ENCODE measurements at regions of chr1 and their contacts with region 1.

Region 1: GRCh38 chr1:43238085-43238484 is 31.7 kb upstream of the TMEM125 start:
- DNase-seq: no peak
- ATAC-seq: peak; percentile 64
- H3K4me3 ChIP-seq: no peak overlapping the region
- H3K27ac ChIP-seq: no peak overlapping the region
- H3K4me1 ChIP-seq: peaks cover 19% of the 10 kb centered on the region
- H3K27me3 ChIP-seq: no peaks in the 10 kb centered on the region
- CTCF ChIP-seq: peak; percentile 62 to 76 (median 74)
- EP300 ChIP-seq: no peak
- POLR2A ChIP-seq: no peak
- RAD21 ChIP-seq: peak; percentile 91

Region 2: DNA sequence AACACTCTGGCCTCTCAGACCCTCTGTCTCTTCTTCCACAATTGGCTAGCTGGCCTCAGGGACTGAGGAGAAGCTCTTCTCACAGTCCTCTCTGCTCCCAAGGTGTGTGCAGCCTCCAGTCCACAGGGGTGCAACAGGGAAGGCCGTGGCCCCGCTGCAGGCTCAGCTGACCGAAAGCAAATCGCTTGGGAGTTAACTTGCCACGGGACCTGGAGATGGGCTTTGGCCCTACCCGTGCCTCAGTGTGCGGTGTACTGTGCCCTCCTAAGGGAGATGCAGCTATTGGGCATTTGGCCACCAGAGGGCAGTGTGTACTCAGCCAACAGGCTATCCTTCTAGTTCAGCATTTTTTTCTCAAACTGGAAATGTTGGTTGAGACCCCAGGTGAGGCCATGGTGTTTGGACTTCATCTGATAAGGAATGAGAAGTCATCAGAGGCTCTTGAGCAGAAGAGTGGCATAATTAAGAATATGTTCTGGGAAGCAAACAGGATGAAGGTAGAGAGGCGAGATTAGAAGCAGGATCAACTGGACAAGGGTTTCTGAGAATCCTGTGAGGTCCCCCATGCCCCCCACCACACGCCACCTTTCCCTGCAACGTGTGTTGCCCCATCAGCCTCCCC is 10.8 kb before region 1 on chr1:
- CTCF ChIA-PET with region 1: interaction called, 34 read pairs
- POLR2A ChIA-PET with region 1: interaction called, 4 read pairs
- RAD21 ChIA-PET with region 1: interaction called, 14 read pairs
- SMC1A ChIA-PET with region 1: interaction called, 10 read pairs
- in situ Hi-C with region 1: no loop called
- intact Hi-C with region 1: no loop called
- DNase-seq: peak; percentile 34
- ATAC-seq: peak; percentile 99
- H3K4me3 ChIP-seq: no peak overlapping the region
- H3K27ac ChIP-seq: no peak overlapping the region
- H3K4me1 ChIP-seq: no peaks in the 10 kb centered on the region; the same call in none of the 2 replicates
- H3K27me3 ChIP-seq: no peaks in the 10 kb centered on the region
- CTCF ChIP-seq: peak; percentile 91 to 95 (median 94)
- EP300 ChIP-seq: no peak
- POLR2A ChIP-seq: no peak
- RAD21 ChIP-seq: peak; percentile 97

Region 3: GRCh38 chr1:43329995-43330751 is 92.1 kb after region 1 on chr1:
- CTCF ChIA-PET with region 1: interaction called, 3 read pairs
- POLR2A ChIA-PET with region 1: no interaction called
- RAD21 ChIA-PET with region 1: interaction called, 11 read pairs
- SMC1A ChIA-PET with region 1: interaction called, 4 read pairs
- in situ Hi-C with region 1: no loop called
- intact Hi-C with region 1: no loop called
- DNase-seq: no peak
- ATAC-seq: peak; percentile 86
- H3K4me3 ChIP-seq: no peak overlapping the region
- H3K27ac ChIP-seq: no peak overlapping the region
- H3K4me1 ChIP-seq: no peaks in the 10 kb centered on the region
- H3K27me3 ChIP-seq: no peaks in the 10 kb centered on the region
- CTCF ChIP-seq: no peak
- EP300 ChIP-seq: no peak
- POLR2A ChIP-seq: no peak
- RAD21 ChIP-seq: no peak

Region 4: GRCh38 chr1:43358746-43359693 is 120.9 kb after region 1 on chr1 and contains the start of gene CDC20:
- CTCF ChIA-PET with region 1: interaction called, 44 read pairs
- POLR2A ChIA-PET with region 1: interaction called, 19 read pairs
- RAD21 ChIA-PET with region 1: interaction called, 49 read pairs
- SMC1A ChIA-PET with region 1: interaction called, 23 read pairs
- in situ Hi-C with region 1: no loop called
- intact Hi-C with region 1: loop called (anchors 2 kb)
- DNase-seq: peak; percentile 89
- ATAC-seq: peak; percentile 98
- H3K4me3 ChIP-seq: peak within 1 kb of the TSS; percentile 92
- H3K27ac ChIP-seq: peak within 1 kb of the TSS; percentile 87
- H3K4me1 ChIP-seq: peaks cover 10% of the 10 kb centered on the region
- H3K27me3 ChIP-seq: no peaks in the 10 kb centered on the region
- CTCF ChIP-seq: no peak
- EP300 ChIP-seq: no peak
- POLR2A ChIP-seq: peak; percentile 91
- RAD21 ChIP-seq: no peak
- polyA plus RNA-seq, gene CDC20: 36.3 to 63.1 TPM

Region 5: DNA sequence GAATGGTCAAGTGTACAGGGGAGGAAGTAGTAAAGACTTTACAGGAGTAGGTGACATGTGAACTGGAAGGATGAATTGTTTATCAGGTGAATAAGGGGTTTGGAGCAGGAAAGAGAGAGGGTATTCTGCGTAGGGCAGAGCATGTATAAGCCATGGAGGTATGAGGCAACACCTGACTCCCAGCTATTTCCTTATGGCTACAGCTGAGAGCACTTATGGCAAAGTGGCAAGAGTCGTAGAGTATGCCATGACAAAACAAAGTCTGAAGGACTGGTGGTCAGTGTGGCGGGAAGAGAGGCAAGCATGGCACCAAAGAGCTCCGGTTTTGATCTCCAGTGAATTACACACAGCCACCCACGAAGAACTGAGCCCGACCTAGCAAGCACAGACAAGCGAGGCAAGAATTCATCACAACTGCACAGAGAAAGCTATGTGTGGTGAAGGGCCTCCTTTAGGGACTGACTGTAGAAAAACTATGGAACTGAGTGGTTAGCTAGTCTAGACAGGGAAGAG is 138.7 kb after region 1 on chr1:
- CTCF ChIA-PET with region 1: interaction called, 8 read pairs
- POLR2A ChIA-PET with region 1: no interaction called
- RAD21 ChIA-PET with region 1: interaction called, 10 read pairs
- SMC1A ChIA-PET with region 1: interaction called, 12 read pairs
- in situ Hi-C with region 1: no loop called
- intact Hi-C with region 1: no loop called
- DNase-seq: no peak
- ATAC-seq: no peak
- H3K4me3 ChIP-seq: no peak overlapping the region
- H3K27ac ChIP-seq: no peak overlapping the region
- H3K4me1 ChIP-seq: no peaks in the 10 kb centered on the region; the same call in 1 of the 2 replicates
- H3K27me3 ChIP-seq: no peaks in the 10 kb centered on the region
- CTCF ChIP-seq: no peak
- EP300 ChIP-seq: no peak
- POLR2A ChIP-seq: no peak
- RAD21 ChIP-seq: no peak

Region 6: GRCh38 chr1:43389326-43390313 is 151.5 kb after region 1 on chr1 and contains the starts of genes MED8 and SZT2:
- CTCF ChIA-PET with region 1: interaction called, 5 read pairs
- POLR2A ChIA-PET with region 1: interaction called, 3 read pairs
- RAD21 ChIA-PET with region 1: interaction called, 19 read pairs
- SMC1A ChIA-PET with region 1: interaction called, 14 read pairs
- in situ Hi-C with region 1: no loop called
- intact Hi-C with region 1: no loop called
- DNase-seq: peak; percentile 86
- ATAC-seq: peak; percentile 97
- H3K4me3 ChIP-seq: peak within 1 kb of the TSS; percentile 87
- H3K27ac ChIP-seq: peak within 1 kb of the TSS; percentile 82
- H3K4me1 ChIP-seq: peaks cover 18% of the 10 kb centered on the region
- H3K27me3 ChIP-seq: no peaks in the 10 kb centered on the region
- CTCF ChIP-seq: no peak
- EP300 ChIP-seq: no peak
- POLR2A ChIP-seq: peak; percentile 98
- RAD21 ChIP-seq: no peak
- polyA plus RNA-seq, gene MED8: 59.8 to 61.7 TPM
- polyA plus RNA-seq, gene SZT2: 1.4 to 1.9 TPM

Region 7: DNA sequence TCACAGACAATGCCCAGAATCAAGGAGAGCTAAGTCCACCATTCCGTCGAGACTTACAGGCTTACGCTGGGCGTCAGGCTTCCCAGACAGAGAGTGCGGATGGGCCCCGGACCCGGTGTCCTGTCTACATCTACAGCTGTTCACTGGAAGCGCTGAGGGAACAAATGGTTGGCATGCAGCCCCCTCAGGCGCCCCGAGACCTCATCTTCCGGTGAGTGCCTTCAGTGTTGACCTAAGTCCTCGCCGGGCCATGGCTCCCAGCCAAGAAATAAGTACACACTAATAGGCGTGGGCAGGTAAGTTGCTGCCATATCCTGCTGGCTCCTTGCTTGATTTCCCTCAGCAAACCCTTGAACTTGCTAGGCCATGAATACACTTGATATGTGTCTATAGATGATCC is 189.4 kb after region 1 on chr1:
- CTCF ChIA-PET with region 1: no interaction called
- POLR2A ChIA-PET with region 1: no interaction called
- RAD21 ChIA-PET with region 1: no interaction called
- SMC1A ChIA-PET with region 1: no interaction called
- in situ Hi-C with region 1: no loop called
- intact Hi-C with region 1: no loop called
- DNase-seq: no peak
- ATAC-seq: no peak
- H3K4me3 ChIP-seq: no peak overlapping the region
- H3K27ac ChIP-seq: no peak overlapping the region
- H3K4me1 ChIP-seq: no peaks in the 10 kb centered on the region
- H3K27me3 ChIP-seq: no peaks in the 10 kb centered on the region
- CTCF ChIP-seq: no peak
- EP300 ChIP-seq: no peak
- POLR2A ChIP-seq: no peak
- RAD21 ChIP-seq: no peak

Region 8: DNA sequence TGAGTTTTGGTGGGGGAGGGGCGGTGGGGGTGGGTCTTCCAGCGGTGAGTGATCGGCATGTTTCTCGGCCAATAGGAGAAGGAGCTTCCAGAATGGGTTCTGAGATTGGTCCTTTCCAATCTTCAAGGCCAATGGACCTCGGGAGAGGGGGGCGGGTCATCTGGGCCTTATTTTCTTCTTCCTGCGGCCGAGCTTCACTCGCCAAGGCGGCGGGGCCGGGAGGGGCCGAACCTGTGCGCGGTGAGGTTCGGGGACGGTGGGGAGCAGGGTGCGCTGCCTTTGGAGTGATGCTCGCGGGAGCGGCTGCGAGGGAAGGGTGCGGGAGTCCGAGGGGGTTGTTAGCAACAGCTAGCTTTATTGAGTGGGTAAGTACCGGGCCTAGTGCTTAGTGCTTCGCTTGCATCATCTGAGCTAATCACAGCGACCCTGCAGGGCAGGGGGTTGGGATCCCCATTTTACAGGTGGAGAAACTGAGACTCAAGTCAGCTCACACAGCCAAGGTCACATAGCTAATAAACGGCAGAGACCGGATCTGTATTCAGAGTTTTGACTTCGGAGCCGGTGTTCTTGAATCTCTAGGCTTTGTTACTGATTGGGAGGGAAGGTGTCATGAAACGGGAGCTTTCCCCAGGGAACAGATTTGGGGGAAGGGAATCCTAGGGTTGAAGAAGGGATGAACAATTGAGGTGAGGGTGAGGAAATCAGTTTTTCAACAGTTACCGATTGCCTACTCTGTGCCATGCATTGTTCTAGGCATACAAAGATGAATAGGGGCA is 412.4 kb after region 1 on chr1:
- CTCF ChIA-PET with region 1: interaction called, 6 read pairs
- POLR2A ChIA-PET with region 1: no interaction called
- RAD21 ChIA-PET with region 1: interaction called, 10 read pairs
- SMC1A ChIA-PET with region 1: interaction called, 8 read pairs
- in situ Hi-C with region 1: no loop called
- intact Hi-C with region 1: no loop called
- DNase-seq: peak; percentile 83
- ATAC-seq: peak; percentile 87
- H3K4me3 ChIP-seq: peak overlapping the region; percentile 98
- H3K27ac ChIP-seq: peak overlapping the region; percentile 85
- H3K4me1 ChIP-seq: peaks cover 10% of the 10 kb centered on the region
- H3K27me3 ChIP-seq: no peaks in the 10 kb centered on the region
- CTCF ChIP-seq: no peak
- EP300 ChIP-seq: no peak
- POLR2A ChIP-seq: peak; percentile 100
- RAD21 ChIP-seq: no peak